Left cardiac atrium (tissue), 4 donors: ENCODE measurements at regions of chr11 and their contacts with region 1.

Region 1: DNA sequence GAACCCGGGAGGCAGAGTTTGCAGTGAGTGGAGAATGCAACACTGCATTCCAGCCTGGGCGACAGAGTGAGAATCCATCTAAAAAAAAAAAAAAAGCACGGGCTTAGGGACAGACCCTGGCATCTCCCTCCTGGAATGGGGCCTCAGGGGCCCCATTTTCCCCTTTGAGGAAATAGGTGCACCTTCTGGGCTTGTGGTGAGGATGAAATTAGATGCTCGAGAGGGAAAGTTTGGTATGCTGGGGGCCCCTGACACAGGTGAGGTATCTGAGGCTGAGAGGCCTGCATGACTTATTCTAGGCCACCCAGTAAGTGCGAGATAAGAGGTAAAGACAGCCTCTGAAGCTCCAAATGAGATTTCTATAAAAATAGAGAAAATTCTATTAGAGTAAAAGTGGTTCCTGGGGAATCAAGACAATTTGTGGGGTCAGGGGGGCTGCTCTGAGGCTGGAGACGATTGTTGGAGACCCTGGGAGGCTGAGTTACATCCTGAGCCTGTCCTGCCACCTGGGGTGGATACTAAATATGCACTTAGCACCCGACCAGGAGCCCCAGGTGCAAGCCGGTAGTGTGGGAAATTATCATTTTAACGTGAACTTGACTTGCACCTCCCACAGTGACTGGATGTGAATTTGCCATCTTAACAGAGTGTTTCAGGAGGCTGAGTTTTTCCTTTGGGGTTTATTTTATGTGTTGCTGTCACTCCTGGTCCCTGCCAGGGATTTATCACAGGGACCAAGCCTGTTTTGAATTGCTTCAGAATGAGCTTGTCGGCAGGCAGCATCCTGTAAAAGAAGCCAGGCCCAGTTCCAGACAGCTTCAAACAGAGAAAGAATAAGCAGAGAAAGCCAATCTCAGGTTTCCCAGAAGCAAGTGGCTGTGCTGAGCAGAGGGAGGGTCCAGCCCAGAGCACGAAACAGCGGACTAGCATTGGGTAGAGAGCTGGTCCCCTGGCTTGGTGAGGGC is 48.4 kb upstream of the TSKU start:
- DNase-seq: no peak
- ATAC-seq: no peak

Region 2: DNA sequence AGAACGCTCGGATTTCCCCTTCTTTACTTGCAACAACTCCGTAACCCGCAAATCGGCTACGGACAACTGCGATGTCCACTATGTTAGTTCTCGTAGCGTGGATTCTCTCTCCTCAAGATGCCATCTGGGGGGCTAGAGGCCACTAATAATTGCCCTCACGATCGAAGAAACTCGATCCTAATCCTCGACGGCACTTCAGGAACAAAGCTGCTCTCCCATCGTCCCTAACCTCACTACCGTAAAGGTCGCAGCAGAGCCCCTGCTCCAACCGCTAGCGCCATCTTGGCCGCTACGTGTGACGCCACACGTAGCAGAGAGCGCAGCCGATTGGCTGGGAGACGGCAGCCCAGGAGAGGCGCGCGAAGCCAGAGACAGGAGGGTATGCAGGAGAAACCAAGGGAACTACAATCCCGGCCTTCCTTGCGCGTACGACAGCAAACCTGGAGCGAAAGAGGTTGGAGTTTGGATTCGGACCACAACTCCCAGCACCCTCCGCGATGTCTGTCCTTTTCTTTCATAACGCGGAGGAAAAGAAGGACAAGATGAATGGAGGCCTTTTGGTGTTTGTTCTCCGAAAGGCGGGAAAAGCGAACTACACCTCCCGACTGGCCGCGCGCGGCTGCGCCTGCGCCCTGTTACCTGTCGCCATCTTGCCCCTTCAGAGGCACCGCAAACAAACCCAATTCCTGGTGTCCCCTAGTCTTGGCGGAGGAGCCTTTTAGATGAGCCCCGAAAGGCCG is 290.2 kb before region 1 on chr11 and contains the start of gene EMSY:
- intact Hi-C with region 1: no loop called
- DNase-seq: peak; percentile 97
- ATAC-seq: peak; percentile 97
- total RNA-seq, gene EMSY: 17.8 to 19.7 TPM

Region 3: DNA sequence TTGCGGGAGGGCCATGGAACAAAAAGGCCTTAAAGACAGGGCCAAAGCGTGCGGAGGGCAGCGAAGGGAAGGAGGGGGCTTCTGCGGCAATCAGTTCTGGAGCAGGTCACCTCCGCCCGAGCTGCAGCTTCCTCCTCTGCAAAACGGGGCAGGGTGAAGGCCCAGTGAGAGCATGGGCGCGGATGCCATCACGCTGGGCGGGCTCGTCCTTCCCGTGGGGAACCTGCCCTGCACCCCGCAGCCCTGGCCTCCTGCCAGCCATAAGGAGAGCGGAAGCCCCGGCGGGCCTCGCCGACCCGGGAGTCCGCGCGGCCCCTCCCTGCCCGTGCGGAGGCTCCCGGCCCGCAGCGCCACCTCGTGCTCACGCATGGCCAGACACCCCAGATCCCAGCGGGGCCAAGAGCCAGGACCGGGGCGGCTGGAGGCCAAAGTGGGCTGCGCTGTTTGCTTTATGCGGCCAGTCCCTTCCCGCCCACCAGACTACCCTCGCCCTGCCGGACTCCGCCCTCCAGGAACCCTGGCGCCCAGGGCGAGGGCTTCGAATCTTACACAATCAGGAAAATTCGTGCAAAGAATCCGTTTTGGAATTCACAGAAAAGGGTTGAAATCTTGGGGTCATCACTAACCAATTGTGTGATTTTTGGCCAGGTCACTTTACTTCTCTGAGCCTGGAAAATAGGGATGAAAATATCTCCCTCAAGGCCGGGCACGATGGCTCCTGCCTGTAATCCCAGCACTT is 64.5 kb after region 1 on chr11:
- intact Hi-C with region 1: loop called (anchors 1 to 2 kb)
- DNase-seq: peak; percentile 93
- ATAC-seq: peak; percentile 90 to 93

Region 4: GRCh38 chr11:76919887-76920746 is 185.4 kb after region 1 on chr11:
- intact Hi-C with region 1: loop called (anchors 5 to 10 kb)
- DNase-seq: peak; percentile 78
- ATAC-seq: peak; percentile 93 to 97